Calu3 (cell line): ENCODE measurements at regions of chr4 and their contacts with region 1.

Region 1: DNA sequence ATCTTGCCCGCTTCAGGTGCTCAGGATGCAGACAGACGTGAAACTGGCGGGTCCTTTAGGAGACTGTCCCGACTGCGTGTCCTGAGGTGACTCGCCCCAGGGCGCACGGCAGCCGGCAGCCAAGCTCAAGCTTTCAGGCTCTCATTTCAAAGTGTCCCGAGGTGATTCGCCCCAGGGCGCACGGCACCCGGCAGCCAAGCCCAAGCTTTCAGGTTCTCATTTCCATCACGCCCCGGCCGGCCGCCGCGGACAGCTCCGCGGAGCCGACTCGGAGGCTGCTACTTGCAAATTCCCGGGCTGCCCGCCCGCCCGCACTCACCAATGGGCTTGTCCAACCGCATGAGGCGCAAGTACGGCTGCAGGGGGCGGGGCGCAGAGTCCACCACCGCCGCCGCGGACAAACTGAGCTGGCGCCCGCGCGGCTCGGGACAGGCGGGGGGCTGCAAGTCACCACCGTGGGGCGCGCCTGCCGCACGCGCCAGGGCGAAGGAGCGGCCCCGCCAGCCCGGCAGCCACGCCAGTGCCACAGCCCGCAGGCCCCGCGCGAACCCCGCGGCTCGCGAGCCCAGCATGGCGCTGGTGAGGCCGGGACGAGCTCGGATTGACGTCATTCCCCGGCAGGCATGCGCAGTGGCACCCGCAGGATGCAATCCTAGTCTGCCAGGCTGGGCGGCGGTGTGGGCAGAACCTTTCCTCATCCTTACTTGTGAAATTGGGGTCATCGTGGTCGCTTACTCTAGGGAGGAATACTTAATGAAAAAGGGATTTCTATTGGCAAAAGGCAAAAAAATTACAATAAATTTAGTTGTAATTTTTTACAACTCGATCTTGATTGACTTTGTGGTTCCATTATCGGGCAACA is at the start of gene COQ2:
- DNase-seq: peak; percentile 93
- H3K4me3 Mint-ChIP-seq: peak within 1 kb of the TSS; percentile 83
- H3K27ac Mint-ChIP-seq: peak within 1 kb of the TSS; percentile 84
- H3K4me1 Mint-ChIP-seq: peaks cover 21% of the 10 kb centered on the region
- H3K27me3 Mint-ChIP-seq: no peaks in the 10 kb centered on the region
- CTCF ChIP-seq: no peak
- total RNA-seq, gene COQ2: 15.5 and 16.3 TPM in 2 replicates

Region 2: GRCh38 chr4:82851885-82852750 is 432.3 kb before region 1 on chr4:
- CTCF ChIA-PET with region 1: no interaction called
- intact Hi-C with region 1: loop called (anchors 5 kb)
- DNase-seq: no peak
- H3K4me3 Mint-ChIP-seq: no peak overlapping the region
- H3K27ac Mint-ChIP-seq: no peak overlapping the region
- H3K4me1 Mint-ChIP-seq: no peaks in the 10 kb centered on the region
- H3K27me3 Mint-ChIP-seq: no peaks in the 10 kb centered on the region
- CTCF ChIP-seq: no peak

Region 3: GRCh38 chr4:83054928-83055327 is 229.5 kb before region 1 on chr4:
- CTCF ChIA-PET with region 1: interaction called, 7 read pairs
- intact Hi-C with region 1: loop called (anchors 1 kb)
- DNase-seq: peak; percentile 7
- H3K4me3 Mint-ChIP-seq: no peak overlapping the region
- H3K27ac Mint-ChIP-seq: no peak overlapping the region
- H3K4me1 Mint-ChIP-seq: no peaks in the 10 kb centered on the region
- H3K27me3 Mint-ChIP-seq: no peaks in the 10 kb centered on the region
- CTCF ChIP-seq: no peak

Region 4: DNA sequence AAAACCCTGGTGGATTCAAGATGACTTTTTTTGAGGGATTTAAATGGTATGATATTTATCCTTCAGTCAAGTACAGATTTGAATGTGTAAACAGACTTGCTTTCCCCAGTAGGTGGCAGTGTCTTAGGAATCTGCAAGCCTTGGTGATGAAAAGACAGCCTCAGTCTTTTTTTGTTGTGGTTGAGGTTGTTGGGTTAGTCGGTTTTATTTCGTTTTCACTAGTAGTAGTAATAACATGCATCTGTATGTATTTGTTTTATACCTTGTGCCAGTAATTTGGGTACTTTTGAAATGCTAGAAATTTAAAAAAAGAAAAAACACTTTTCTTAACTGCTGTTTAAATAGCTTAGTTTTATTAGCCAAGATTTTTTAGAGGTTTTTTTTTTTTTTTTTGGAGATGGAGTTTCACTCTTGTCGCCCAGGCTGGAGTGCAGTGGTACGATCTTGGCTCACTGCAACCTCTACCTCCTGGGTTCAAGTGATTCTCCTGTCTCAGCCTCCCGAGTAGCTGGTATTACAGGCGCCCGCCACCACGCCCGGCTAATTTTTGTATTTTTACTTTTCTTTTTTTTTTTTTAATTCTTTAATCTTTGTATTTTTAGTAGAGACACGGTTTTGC is 210.2 kb before region 1 on chr4:
- CTCF ChIA-PET with region 1: interaction called, 5 read pairs
- intact Hi-C with region 1: loop called (anchors 5 kb)
- DNase-seq: peak; percentile 52
- H3K4me3 Mint-ChIP-seq: no peak overlapping the region
- H3K27ac Mint-ChIP-seq: no peak overlapping the region
- H3K4me1 Mint-ChIP-seq: no peaks in the 10 kb centered on the region
- H3K27me3 Mint-ChIP-seq: no peaks in the 10 kb centered on the region
- CTCF ChIP-seq: peak; percentile 37

Region 5: DNA sequence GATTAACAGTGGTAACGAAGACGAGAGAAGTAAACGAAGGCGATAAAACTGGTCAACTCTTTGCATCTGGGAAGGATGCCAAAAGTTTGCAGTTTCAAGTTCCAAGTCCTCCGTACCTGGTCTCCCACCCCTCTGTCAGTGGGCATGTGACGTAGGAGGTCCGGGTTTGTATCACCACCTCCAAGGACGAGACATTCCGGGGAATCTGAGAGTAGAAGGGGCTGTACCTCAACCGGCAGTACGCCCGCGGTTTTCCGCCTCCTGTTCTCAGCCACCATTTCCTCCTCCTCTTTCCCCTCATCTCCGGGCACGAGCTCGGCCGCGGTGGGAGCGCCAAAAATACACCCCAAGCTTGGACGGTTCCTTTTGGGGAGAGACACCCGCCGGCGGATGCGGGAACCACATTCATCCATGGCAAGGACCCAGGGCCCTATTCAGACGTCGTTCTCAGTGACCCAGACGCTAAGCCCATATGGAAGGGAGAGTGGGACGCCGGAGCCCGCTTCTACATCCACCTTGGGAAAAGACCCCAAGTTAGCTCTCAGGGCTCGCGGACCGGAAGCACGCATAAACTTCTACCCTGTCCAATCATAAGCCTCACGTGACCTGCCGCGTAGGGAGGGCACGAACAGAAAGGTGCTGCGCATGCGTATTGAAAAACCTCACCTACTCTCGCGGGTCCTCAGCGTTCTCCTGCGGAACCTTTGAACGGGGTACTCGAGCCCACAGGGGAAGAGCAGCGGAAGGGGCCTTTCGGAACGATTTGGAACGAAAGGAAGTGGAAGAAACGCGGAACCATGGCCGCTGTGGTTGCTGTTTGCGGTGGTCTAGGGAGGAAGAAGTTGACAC is 171.1 kb after region 1 on chr4 and contains the starts of genes HELQ and MRPS18C:
- CTCF ChIA-PET with region 1: no interaction called
- intact Hi-C with region 1: no loop called
- DNase-seq: peak; percentile 88
- H3K4me3 Mint-ChIP-seq: peak within 1 kb of the TSS; percentile 93
- H3K27ac Mint-ChIP-seq: peak within 1 kb of the TSS; percentile 98
- H3K4me1 Mint-ChIP-seq: no peaks in the 10 kb centered on the region
- H3K27me3 Mint-ChIP-seq: no peaks in the 10 kb centered on the region
- CTCF ChIP-seq: no peak
- total RNA-seq, gene HELQ: 7.8 and 8.2 TPM in 2 replicates
- total RNA-seq, gene MRPS18C: 39.0 and 47.9 TPM in 2 replicates

Region 6: DNA sequence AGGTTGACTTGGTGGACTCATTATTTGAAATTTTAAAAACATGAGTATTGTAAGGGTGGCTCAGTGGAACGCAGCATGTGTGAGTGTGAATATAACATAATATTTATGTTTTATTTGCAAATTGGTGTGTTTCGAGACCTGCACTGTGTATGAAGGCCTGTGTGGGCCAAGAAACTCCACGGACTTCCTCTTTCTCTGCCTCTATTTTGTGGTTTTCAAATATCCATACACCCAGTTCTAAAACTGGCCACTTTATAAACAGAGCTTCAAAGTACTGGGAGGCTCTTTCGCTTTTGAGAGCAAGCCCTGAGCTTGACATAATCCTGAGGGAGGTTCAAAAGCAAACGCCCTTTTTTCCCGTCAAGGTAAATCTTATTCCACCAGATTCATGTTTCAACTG is 439.2 kb after region 1 on chr4:
- CTCF ChIA-PET with region 1: no interaction called
- intact Hi-C with region 1: no loop called
- DNase-seq: no peak
- H3K4me3 Mint-ChIP-seq: no peak overlapping the region
- H3K27ac Mint-ChIP-seq: no peak overlapping the region
- H3K4me1 Mint-ChIP-seq: no peaks in the 10 kb centered on the region
- H3K27me3 Mint-ChIP-seq: peaks cover 8% of the 10 kb centered on the region
- CTCF ChIP-seq: no peak